K562 (cell line): ENCODE measurements at regions of chr1 and their contacts with region 1.

Region 1: DNA sequence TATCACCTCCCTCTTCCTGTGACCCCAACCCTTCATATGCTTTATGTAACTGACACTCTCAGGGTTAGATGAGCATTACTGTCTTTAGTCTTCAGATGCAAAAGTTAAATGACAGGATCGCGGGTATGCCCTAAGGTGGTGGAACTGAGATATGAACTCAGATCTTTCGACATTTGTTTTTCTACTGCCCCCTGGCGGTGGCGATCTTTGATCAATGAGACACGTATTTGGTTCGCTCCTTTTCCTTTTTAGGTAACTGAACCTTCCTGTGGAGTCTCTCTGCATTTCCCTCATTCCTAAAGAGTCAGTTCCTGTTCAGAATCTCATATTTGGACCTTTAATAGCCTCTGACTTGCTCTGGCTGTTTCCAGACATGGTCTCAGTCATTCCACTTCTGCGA is 47.8 kb upstream of the ZP4 start:
- DNase-seq: peak; percentile 7 to 48 (median 40)
- ATAC-seq: no peak
- H3K4me3 ChIP-seq: no peak overlapping the region
- H3K27ac ChIP-seq: no peak overlapping the region
- H3K4me1 ChIP-seq: no peaks in the 10 kb centered on the region
- H3K27me3 ChIP-seq: no peaks in the 10 kb centered on the region
- CTCF ChIP-seq: peak in 2 of 3 experiments; percentile 9 to 42; a peak in 2 of 6 replicates
- EP300 ChIP-seq: no peak
- POLR2A ChIP-seq: no peak
- RAD21 ChIP-seq: peak in 1 of 2 experiments; percentile 31; a peak in 2 of 4 replicates

Region 2: GRCh38 chr1:237864338-237865244 is 74.0 kb before region 1 on chr1:
- CTCF ChIA-PET with region 1: no interaction called
- POLR2A ChIA-PET with region 1: no interaction called
- in situ Hi-C with region 1: no loop called
- intact Hi-C with region 1: loop called (anchors 2 kb)
- DNase-seq: peak; percentile 45 to 66 (median 61)
- ATAC-seq: peak; percentile 89
- H3K4me3 ChIP-seq: no peak overlapping the region
- H3K27ac ChIP-seq: no peak overlapping the region
- H3K4me1 ChIP-seq: peaks cover 0 to 3% of the 10 kb centered on the region in 2 experiments; a peak in 1 of 5 replicates
- H3K27me3 ChIP-seq: no peaks in the 10 kb centered on the region
- CTCF ChIP-seq: peak; percentile 67 to 79 (median 68); a peak in 5 of 6 replicates
- EP300 ChIP-seq: no peak
- POLR2A ChIP-seq: no peak
- RAD21 ChIP-seq: peak; percentile 75 to 78

Region 3: GRCh38 chr1:237998581-237998980 is 60.0 kb after region 1 on chr1:
- CTCF ChIA-PET with region 1: no interaction called
- POLR2A ChIA-PET with region 1: no interaction called
- in situ Hi-C with region 1: no loop called
- intact Hi-C with region 1: no loop called
- DNase-seq: no peak
- ATAC-seq: no peak
- H3K4me3 ChIP-seq: no peak overlapping the region
- H3K27ac ChIP-seq: no peak overlapping the region
- H3K4me1 ChIP-seq: no peaks in the 10 kb centered on the region
- H3K27me3 ChIP-seq: no peaks in the 10 kb centered on the region
- CTCF ChIP-seq: no peak
- EP300 ChIP-seq: no peak
- POLR2A ChIP-seq: no peak
- RAD21 ChIP-seq: no peak

Region 4: DNA sequence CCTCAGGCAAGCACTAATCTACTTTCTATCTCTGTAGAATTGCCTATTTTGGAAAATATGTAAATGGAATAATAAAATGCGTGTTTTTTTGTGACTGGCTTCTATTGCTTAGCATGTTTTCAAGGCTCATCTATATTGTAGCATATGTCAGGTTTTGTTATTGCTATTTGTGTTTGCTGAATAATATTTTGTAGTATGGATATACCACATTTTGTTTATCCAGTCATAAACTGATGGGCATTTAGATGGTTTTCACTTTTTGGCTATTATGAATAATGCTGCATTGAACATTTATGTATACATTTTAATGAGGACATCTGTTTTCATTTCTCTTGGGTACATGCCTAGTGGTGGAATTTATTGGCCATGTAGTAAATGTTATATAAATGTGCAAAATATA is 135.4 kb after region 1 on chr1:
- CTCF ChIA-PET with region 1: no interaction called
- POLR2A ChIA-PET with region 1: no interaction called
- in situ Hi-C with region 1: no loop called
- intact Hi-C with region 1: no loop called
- DNase-seq: no peak
- ATAC-seq: no peak
- H3K4me3 ChIP-seq: no peak overlapping the region
- H3K27ac ChIP-seq: no peak overlapping the region
- H3K4me1 ChIP-seq: no peaks in the 10 kb centered on the region
- H3K27me3 ChIP-seq: no peaks in the 10 kb centered on the region
- CTCF ChIP-seq: no peak
- EP300 ChIP-seq: no peak
- POLR2A ChIP-seq: no peak
- RAD21 ChIP-seq: no peak